Panc1 (cell line): ENCODE measurements at regions of chr1 and their contacts with region 1.

Region 1: DNA sequence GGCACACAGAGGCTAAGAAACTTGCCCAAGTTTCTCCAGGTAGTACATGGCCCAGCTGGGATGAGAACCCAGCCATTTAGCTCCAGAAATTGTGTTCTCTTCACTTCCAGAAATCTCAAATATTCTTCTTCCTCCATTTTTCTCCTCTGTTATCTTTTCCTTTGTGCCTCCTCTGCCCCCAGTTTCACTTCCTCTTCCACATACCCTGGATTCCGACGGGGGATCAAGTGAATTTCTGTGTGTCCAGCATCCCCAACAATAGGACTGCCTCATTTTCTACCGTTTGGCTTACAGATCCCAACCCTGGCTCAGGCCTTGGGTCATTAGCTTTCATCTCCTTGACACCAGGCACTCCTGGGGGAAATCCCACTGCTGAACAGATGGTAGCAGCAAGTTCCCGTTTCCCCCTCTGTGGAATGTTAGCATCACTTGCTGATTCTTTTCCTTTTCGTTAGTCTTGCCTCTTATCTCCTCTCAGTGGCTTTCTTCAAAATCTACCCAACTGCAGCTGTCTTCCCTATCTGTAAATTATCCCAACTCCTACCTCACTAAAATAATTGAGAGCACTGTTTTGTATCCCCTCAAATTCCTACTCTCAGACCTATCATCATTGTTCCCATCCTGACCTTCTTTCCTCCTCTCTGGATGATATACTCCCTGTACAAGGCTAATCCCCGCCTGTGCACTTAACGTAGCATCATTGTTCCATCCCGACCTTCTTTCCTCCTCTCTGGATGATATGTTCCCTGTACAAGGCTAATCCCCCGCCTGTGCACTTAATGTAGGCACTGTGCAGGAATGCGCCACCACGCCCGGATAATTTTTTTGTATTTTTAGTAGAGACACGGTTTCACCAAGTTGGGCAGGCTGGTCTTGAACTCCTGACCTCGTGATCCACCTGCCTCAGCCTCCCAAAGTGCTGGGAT is 36.5 kb downstream of the SCCPDH start:
- DNase-seq: no peak
- ATAC-seq: no peak
- H3K4me3 ChIP-seq: no peak overlapping the region
- H3K27ac ChIP-seq: no peak overlapping the region
- H3K4me1 ChIP-seq: no peaks in the 10 kb centered on the region
- H3K27me3 ChIP-seq: no peaks in the 10 kb centered on the region
- CTCF ChIP-seq: no peak

Region 2: GRCh38 chr1:246748880-246749279 is 11.8 kb before region 1 on chr1:
- CTCF ChIA-PET with region 1: no interaction called
- POLR2A ChIA-PET with region 1: interaction called, 17 read pairs
- in situ Hi-C with region 1: no loop called
- intact Hi-C with region 1: no loop called
- DNase-seq: no peak
- ATAC-seq: 0 out of 2 replicates have a peak, but pooled peaks have one; percentile 46
- H3K4me3 ChIP-seq: no peak overlapping the region
- H3K27ac ChIP-seq: no peak overlapping the region
- H3K4me1 ChIP-seq: 0 out of 2 replicates have a peak, but pooled peaks cover 2% of the 10 kb centered on the region
- H3K27me3 ChIP-seq: no peaks in the 10 kb centered on the region
- CTCF ChIP-seq: no peak

Region 3: GRCh38 chr1:246801241-246802020 is 40.7 kb after region 1 on chr1:
- CTCF ChIA-PET with region 1: no interaction called
- POLR2A ChIA-PET with region 1: no interaction called
- in situ Hi-C with region 1: no loop called
- intact Hi-C with region 1: no loop called
- DNase-seq: no peak
- ATAC-seq: no peak
- H3K4me3 ChIP-seq: no peak overlapping the region
- H3K27ac ChIP-seq: no peak overlapping the region
- H3K4me1 ChIP-seq: no peaks in the 10 kb centered on the region
- H3K27me3 ChIP-seq: no peaks in the 10 kb centered on the region; the same call in 1 of the 2 replicates
- CTCF ChIP-seq: no peak